CD8-positive, alpha-beta T cell (primary cell): ENCODE measurements at regions of chr6 and their contacts with region 1.

Region 1: GRCh38 chr6:47047479-47048407 is 5.6 kb upstream of the ADGRF1 start:
- DNase-seq: peak in 5 of 9 experiments; percentile 1 to 42 (median 16)
- ATAC-seq: no peak
- H3K4me3 ChIP-seq: no peak overlapping the region
- H3K4me3 Mint-ChIP-seq: no peak overlapping the region
- H3K27ac ChIP-seq: no peak overlapping the region
- H3K27ac Mint-ChIP-seq: no peak overlapping the region
- H3K4me1 ChIP-seq: no peaks in the 10 kb centered on the region
- H3K4me1 Mint-ChIP-seq: peaks cover 3% of the 10 kb centered on the region
- H3K27me3 ChIP-seq: no peaks in the 10 kb centered on the region
- H3K27me3 Mint-ChIP-seq: peaks cover 8% of the 10 kb centered on the region
- CTCF ChIP-seq: peak; percentile 46

Region 2: DNA sequence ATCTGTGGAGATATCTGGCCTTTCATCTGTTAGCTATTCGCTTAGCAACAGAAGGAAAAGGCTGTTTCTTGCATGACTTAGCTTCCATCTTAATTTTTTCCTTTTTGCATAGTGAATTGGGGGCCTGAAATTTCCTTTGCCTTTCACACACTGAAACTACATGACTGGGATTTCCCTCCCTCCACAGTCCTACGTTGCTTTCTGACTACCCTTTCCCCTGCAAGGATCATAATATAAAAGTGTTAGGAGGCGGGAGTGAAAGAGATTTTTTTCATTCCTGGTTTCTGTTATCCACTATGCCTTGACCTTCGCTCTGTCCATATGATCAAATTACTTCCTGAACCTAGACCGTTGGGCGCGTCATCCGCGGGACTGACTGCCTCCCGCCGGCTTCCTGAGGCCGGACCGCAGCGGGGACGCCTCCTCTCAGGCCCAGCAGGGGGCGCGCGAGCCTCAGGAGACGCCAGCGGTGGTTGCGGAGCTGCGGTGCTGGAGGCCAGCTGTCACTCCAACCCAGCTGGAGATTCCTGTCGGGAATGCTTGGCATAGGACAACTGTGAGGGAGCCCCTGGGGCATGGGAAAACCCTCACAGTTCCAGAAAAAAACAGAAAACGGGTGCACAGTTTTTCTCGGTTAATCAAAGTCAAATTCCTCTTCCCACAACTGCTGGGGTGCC is 198.9 kb before region 1 on chr6:
- CTCF ChIA-PET with region 1: no interaction called
- POLR2A ChIA-PET with region 1: no interaction called
- intact Hi-C with region 1: loop called in 1 of 2 experiments (anchors 2 kb)
- DNase-seq: peak in 8 of 9 experiments; percentile 22 to 70 (median 56)
- ATAC-seq: no peak
- H3K4me3 ChIP-seq: no peak overlapping the region
- H3K4me3 Mint-ChIP-seq: peak overlapping the region; percentile 56
- H3K27ac ChIP-seq: no peak overlapping the region
- H3K27ac Mint-ChIP-seq: no peak overlapping the region
- H3K4me1 ChIP-seq: no peaks in the 10 kb centered on the region
- H3K4me1 Mint-ChIP-seq: peaks cover 4% of the 10 kb centered on the region
- H3K27me3 ChIP-seq: peaks cover 0 to 2% of the 10 kb centered on the region in 2 experiments
- H3K27me3 Mint-ChIP-seq: peaks cover 22% of the 10 kb centered on the region
- CTCF ChIP-seq: peak; percentile 67

Region 3: GRCh38 chr6:47009566-47009965 is 38.2 kb before region 1 on chr6:
- CTCF ChIA-PET with region 1: no interaction called
- POLR2A ChIA-PET with region 1: no interaction called
- intact Hi-C with region 1: no loop called
- DNase-seq: no peak
- ATAC-seq: no peak
- H3K4me3 ChIP-seq: no peak overlapping the region
- H3K4me3 Mint-ChIP-seq: no peak overlapping the region
- H3K27ac ChIP-seq: no peak overlapping the region
- H3K27ac Mint-ChIP-seq: no peak overlapping the region
- H3K4me1 ChIP-seq: no peaks in the 10 kb centered on the region
- H3K4me1 Mint-ChIP-seq: no peaks in the 10 kb centered on the region
- H3K27me3 ChIP-seq: no peaks in the 10 kb centered on the region
- H3K27me3 Mint-ChIP-seq: peaks cover 2% of the 10 kb centered on the region
- CTCF ChIP-seq: no peak

Region 4: DNA sequence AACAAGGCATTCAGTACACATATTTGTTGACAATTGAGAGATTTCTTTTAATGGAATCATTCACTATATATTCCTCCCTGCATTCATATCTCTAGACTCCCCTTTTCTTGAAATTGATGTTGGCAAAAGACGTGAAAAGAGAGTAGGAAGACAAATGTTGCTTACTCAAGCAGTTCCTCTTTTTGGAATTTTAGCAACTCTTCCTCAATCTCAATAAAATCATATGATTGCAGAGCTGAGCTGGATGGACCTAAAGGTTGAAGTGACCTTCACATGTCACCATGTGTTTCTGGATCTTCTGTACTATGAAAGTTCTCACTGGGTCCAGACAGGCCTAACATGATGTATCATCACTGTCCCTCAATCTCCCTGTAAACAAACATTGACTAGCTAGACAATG is 24.2 kb before region 1 on chr6:
- CTCF ChIA-PET with region 1: no interaction called
- POLR2A ChIA-PET with region 1: no interaction called
- intact Hi-C with region 1: no loop called
- DNase-seq: no peak
- ATAC-seq: no peak
- H3K4me3 ChIP-seq: no peak overlapping the region
- H3K4me3 Mint-ChIP-seq: no peak overlapping the region
- H3K27ac ChIP-seq: no peak overlapping the region
- H3K27ac Mint-ChIP-seq: no peak overlapping the region
- H3K4me1 ChIP-seq: no peaks in the 10 kb centered on the region
- H3K4me1 Mint-ChIP-seq: no peaks in the 10 kb centered on the region
- H3K27me3 ChIP-seq: no peaks in the 10 kb centered on the region
- H3K27me3 Mint-ChIP-seq: no peaks in the 10 kb centered on the region
- CTCF ChIP-seq: no peak